A549 (cell line): ENCODE measurements at regions of chr2 and their contacts with region 1.

Region 1: GRCh38 chr2:10267551-10268465 is 34.9 kb upstream of the HPCAL1 start:
- DNase-seq: no peak
- ATAC-seq: no peak
- H3K4me3 ChIP-seq: no peak overlapping the region
- H3K27ac ChIP-seq: no peak overlapping the region; a peak in 1 of 6 replicates
- H3K4me1 ChIP-seq: peaks cover 22% of the 10 kb centered on the region
- CTCF ChIP-seq: no peak
- EP300 ChIP-seq: no peak
- POLR2A ChIP-seq: no peak
- RAD21 ChIP-seq: no peak

Region 2: GRCh38 chr2:10285556-10286198 is 17.9 kb after region 1 on chr2:
- CTCF ChIA-PET with region 1: interaction called, 21 read pairs
- POLR2A ChIA-PET with region 1: no interaction called
- DNase-seq: peak; percentile 86 to 90
- ATAC-seq: peak; percentile 54 to 76
- H3K4me3 ChIP-seq: no peak overlapping the region
- H3K27ac ChIP-seq: peak overlapping the region; percentile 87
- H3K4me1 ChIP-seq: peaks cover 67% of the 10 kb centered on the region
- CTCF ChIP-seq: no peak
- EP300 ChIP-seq: no peak
- POLR2A ChIP-seq: peak; percentile 35; the same call in 1 of the 2 replicates
- RAD21 ChIP-seq: peak in 1 of 2 experiments; percentile 33; a peak in 2 of 5 replicates